CD4-positive, alpha-beta T cell (primary cell): ENCODE measurements at regions of chr19 and their contacts with region 1.

Region 1: DNA sequence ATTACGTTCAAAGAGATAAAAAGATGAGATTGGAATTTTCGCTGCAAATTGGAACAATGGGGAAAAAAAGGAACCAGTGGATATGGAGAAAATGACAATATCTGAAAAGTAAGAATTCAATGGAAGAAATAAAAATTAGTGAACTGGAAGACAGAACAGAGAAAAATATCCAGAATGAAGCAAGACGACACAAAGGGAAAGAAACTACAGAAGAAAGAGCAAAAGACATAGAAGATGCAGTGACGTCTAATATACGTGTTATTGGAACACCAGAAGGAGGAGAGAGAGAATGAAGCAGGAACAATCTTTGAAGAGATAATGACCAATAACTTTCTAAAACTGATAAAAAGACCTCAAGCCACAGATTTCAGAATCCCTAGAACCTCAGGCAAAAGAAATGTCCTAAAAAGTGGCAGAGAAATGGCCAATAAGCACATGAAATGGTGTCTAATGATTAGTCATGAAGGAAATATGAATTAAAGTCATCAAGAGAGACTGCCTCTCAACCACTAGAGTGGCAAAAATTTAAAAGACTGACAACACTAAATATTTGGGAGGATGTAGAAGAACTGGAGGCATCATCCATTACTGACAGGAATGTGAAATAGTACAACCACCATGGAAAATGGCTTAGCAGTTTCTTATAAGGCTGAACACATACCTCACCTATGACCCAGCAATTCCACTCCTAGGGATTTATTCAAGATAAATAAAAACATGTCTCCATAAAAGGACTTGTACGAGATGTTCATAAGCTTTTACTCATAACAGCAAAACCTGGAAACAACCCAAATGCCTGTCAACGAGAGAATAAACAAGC is 56.5 kb downstream of the GADD45B start:
- DNase-seq: no peak
- ATAC-seq: no peak
- H3K4me3 ChIP-seq: no peak overlapping the region
- H3K4me3 Mint-ChIP-seq: no peak overlapping the region
- H3K27ac ChIP-seq: no peak overlapping the region
- H3K27ac Mint-ChIP-seq: no peak overlapping the region
- H3K4me1 ChIP-seq: peaks cover 8% of the 10 kb centered on the region
- H3K4me1 Mint-ChIP-seq: peaks cover 18% of the 10 kb centered on the region
- H3K27me3 ChIP-seq: no peaks in the 10 kb centered on the region
- H3K27me3 Mint-ChIP-seq: no peaks in the 10 kb centered on the region
- CTCF ChIP-seq: no peak

Region 2: DNA sequence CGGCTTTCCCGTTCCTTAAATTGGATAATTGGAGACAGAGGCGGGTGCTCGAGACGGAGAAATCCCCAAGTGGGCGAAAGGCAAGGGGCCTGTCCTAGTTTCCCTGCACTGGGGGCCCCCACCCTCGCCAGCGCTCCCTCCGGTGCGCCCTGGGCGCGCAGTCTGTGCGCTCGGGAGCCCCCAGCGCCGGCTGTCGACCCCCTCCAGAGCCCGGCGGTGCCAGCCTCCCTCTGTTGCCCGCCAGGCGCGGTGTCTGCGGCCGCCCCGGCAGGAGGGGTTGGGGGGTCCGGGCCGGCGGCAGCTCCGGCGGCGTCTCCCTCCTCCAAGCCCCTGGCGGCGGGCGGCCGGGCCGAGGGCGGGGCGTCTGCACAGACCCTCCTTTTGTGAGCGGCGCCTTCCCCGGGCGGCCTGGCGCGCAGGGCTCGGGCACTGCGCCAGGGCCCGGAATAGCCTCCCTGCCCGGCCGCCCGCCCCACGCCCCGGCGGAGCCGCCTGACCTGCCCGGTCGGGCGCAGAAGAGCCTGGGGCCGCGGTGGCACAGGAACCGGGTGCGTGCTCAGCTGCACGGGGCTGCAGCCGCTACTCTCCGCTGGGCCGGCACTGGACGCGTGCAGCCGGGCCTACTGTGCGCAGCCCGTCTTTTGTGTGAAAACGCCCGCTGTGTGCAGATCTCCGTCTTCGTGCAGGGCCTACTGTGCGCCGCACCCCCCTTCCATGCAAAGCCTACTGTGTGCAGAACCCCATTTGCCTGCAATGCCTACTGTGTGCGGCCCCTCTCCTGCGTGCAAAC is 43.3 kb before region 1 on chr19:
- CTCF ChIA-PET with region 1: no interaction called
- POLR2A ChIA-PET with region 1: no interaction called
- intact Hi-C with region 1: loop called in 1 of 2 experiments (anchors 10 kb)
- DNase-seq: peak in 1 of 14 experiments; percentile 23
- ATAC-seq: peak; percentile 29
- H3K4me3 ChIP-seq: no peak overlapping the region
- H3K4me3 Mint-ChIP-seq: peak overlapping the region; percentile 57
- H3K27ac ChIP-seq: no peak overlapping the region
- H3K27ac Mint-ChIP-seq: no peak overlapping the region
- H3K4me1 ChIP-seq: peaks cover 31% of the 10 kb centered on the region
- H3K4me1 Mint-ChIP-seq: peaks cover 17% of the 10 kb centered on the region
- H3K27me3 ChIP-seq: peaks cover 24 to 30% of the 10 kb centered on the region in 2 experiments
- H3K27me3 Mint-ChIP-seq: peaks cover 43% of the 10 kb centered on the region
- CTCF ChIP-seq: no peak

Region 3: GRCh38 chr19:2711172-2711874 is 178.9 kb after region 1 on chr19:
- CTCF ChIA-PET with region 1: no interaction called
- POLR2A ChIA-PET with region 1: no interaction called
- intact Hi-C with region 1: no loop called
- DNase-seq: peak in 1 of 14 experiments; percentile 23
- ATAC-seq: no peak
- H3K4me3 ChIP-seq: no peak overlapping the region
- H3K4me3 Mint-ChIP-seq: no peak overlapping the region
- H3K27ac ChIP-seq: no peak overlapping the region
- H3K27ac Mint-ChIP-seq: no peak overlapping the region
- H3K4me1 ChIP-seq: peaks cover 7% of the 10 kb centered on the region
- H3K4me1 Mint-ChIP-seq: peaks cover 25% of the 10 kb centered on the region
- H3K27me3 ChIP-seq: no peaks in the 10 kb centered on the region
- H3K27me3 Mint-ChIP-seq: peaks cover 5% of the 10 kb centered on the region
- CTCF ChIP-seq: no peak